ENCODE measurements at regions of chr14 and their contacts with region 1.

Region 1: DNA sequence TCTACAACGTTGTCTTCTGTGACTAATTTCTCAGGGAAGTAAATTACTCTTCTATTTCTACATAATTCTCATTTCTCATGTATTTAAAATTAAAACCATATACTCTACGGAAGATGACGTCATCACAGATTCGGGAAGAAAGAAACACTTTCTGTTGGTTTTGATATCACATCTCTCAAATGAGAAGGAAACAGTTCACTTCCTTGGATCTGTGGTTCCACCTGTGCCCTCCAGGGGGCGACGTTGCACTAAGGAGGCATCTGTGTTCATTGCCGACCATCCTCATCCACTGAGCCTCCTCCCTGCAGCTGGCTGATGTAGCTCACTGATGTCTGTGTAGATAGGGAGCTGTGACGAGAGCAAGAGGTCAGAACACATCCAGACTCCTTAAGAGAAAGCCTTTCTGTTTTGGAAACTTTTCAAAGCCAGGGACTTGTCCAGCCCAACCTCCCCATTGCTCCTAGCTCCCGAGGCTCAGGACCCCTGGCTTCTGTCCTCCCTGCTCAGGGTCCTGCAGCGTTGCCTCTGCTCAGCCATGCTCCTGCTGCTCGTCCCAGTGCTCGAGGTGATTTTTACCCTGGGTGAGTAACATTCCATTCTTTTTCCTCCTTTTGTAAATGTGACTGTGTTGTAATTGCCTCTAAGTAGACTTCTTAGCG is 172.7 kb upstream of the OR4E1 start:
- DNase-seq: no peak
- ATAC-seq: peak; percentile 80
- H3K4me3 ChIP-seq: no peak overlapping the region
- H3K27ac ChIP-seq: no peak overlapping the region
- H3K4me1 ChIP-seq: no peaks in the 10 kb centered on the region
- H3K27me3 ChIP-seq: no peaks in the 10 kb centered on the region
- CTCF ChIP-seq: peak; percentile 45 to 76 (median 74)
- EP300 ChIP-seq: no peak
- POLR2A ChIP-seq: no peak
- RAD21 ChIP-seq: no peak

Region 2: DNA sequence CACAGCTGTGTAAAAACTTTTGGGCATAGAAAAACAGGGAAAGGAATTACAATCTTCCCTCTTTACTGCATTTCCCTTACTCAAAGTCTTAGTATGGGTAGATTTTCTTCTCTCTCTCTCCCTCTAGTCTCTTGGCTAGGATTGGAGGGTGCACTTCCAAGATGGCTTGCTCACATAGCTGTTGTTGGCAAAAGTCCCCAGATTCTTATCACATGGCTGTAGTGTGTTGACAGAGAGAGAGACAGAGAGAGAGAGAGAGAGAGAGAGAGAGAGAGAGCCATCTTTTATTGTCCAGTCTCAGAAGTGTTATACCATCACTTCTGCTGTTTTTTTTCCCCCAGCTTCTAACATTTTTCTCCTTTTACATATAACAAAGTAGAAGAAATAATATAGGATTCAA is 199.0 kb before region 1 on chr14:
- CTCF ChIA-PET with region 1: no interaction called
- POLR2A ChIA-PET with region 1: no interaction called
- RAD21 ChIA-PET with region 1: no interaction called
- SMC1A ChIA-PET with region 1: no interaction called
- in situ Hi-C with region 1: no loop called
- intact Hi-C with region 1: no loop called
- DNase-seq: no peak
- ATAC-seq: no peak
- H3K4me3 ChIP-seq: no peak overlapping the region
- H3K27ac ChIP-seq: no peak overlapping the region
- H3K4me1 ChIP-seq: no peaks in the 10 kb centered on the region
- H3K27me3 ChIP-seq: no peaks in the 10 kb centered on the region
- CTCF ChIP-seq: no peak
- EP300 ChIP-seq: no peak
- POLR2A ChIP-seq: no peak
- RAD21 ChIP-seq: no peak

Region 3: DNA sequence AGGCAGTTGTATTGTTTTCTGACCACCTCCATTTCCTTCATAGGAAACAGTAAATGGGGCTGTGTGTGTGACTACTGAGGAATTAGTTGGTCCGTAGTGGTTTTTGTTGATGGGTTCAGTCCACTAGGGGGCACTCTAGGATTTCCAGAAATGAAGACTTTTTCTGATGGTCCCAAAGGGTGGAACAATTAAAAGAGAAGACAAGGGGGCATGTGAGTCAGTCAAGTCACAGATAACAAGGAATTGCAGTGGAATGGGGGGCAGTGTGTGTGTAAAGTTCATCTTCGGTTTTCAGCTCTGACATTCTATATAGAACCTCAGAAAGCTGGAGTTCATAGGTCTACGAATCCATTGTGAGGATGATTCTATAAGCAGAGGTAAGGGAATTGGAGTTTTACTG is 13.8 kb after region 1 on chr14:
- CTCF ChIA-PET with region 1: interaction called, 49 read pairs
- POLR2A ChIA-PET with region 1: no interaction called
- RAD21 ChIA-PET with region 1: no interaction called
- SMC1A ChIA-PET with region 1: interaction called, 4 read pairs
- in situ Hi-C with region 1: no loop called
- intact Hi-C with region 1: no loop called
- DNase-seq: no peak
- ATAC-seq: peak; percentile 47; the same call in 2 of the 3 replicates
- H3K4me3 ChIP-seq: no peak overlapping the region
- H3K27ac ChIP-seq: no peak overlapping the region
- H3K4me1 ChIP-seq: no peaks in the 10 kb centered on the region
- H3K27me3 ChIP-seq: no peaks in the 10 kb centered on the region; a peak in 1 of 4 replicates
- CTCF ChIP-seq: peak; percentile 28 to 50 (median 50); a peak in 5 of 6 replicates
- EP300 ChIP-seq: no peak
- POLR2A ChIP-seq: no peak
- RAD21 ChIP-seq: no peak

Measured in GM12878 (cell line).